OCI-LY7 (cell line): ENCODE measurements at regions of chr2 and their contacts with region 1.

Region 1: GRCh38 chr2:118003396-118003824 is 10.5 kb downstream of the CCDC93 start:
- DNase-seq: peak; percentile 82
- H3K4me3 ChIP-seq: no peak overlapping the region
- H3K27ac ChIP-seq: no peak overlapping the region
- H3K4me1 ChIP-seq: peaks cover 14% of the 10 kb centered on the region
- CTCF ChIP-seq: peak; percentile 97

Region 2: GRCh38 chr2:117835990-117836760 is 167.2 kb before region 1 on chr2:
- CTCF ChIA-PET with region 1: interaction called, 11 read pairs
- POLR2A ChIA-PET with region 1: interaction called, 6 read pairs
- intact Hi-C with region 1: loop called (anchors 1 kb)
- DNase-seq: peak; percentile 68
- H3K4me3 ChIP-seq: no peak overlapping the region
- H3K27ac ChIP-seq: no peak overlapping the region
- H3K4me1 ChIP-seq: peaks cover 4% of the 10 kb centered on the region
- CTCF ChIP-seq: peak; percentile 77

Region 3: DNA sequence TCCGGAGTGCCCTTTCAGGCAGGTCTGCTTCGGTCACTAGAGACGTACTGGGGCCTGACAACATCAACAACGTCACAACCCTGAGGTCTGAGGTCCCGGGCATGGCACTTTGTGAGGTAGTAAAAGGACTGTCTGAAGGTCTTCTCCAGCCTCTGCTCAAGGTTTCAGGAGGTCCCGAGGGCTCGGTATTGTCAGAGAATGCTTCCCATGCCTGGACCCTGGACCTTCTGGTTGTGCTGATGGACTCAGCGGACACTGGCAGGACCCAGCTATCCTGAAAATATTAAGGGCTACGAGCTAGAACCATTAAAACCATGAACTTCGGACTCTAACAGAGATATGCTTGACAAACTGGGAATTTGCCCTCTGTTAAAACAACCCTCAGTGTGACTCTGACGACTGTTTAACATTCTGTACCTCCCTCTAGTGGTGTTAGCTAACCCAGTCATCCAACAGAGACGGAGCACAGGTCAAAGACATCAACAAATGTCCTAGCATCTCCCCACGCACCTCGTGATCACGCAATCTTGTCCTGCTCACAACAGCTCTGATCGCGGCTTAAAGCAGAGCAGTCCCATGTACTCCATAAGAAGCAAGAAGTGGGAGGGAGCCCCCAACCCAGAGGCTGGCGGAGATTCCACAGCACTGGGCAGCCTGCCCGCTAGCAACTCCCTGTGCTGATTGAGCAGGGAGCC is 86.0 kb before region 1 on chr2:
- CTCF ChIA-PET with region 1: interaction called, 3 read pairs
- POLR2A ChIA-PET with region 1: interaction called, 5 read pairs
- intact Hi-C with region 1: loop called (anchors 5 kb)
- DNase-seq: no peak
- H3K4me3 ChIP-seq: peak overlapping the region; percentile 28
- H3K27ac ChIP-seq: peak overlapping the region; percentile 100
- H3K4me1 ChIP-seq: peaks cover 56% of the 10 kb centered on the region
- CTCF ChIP-seq: 0 out of 2 replicates have a peak, but pooled peaks have one; percentile 21

Region 4: DNA sequence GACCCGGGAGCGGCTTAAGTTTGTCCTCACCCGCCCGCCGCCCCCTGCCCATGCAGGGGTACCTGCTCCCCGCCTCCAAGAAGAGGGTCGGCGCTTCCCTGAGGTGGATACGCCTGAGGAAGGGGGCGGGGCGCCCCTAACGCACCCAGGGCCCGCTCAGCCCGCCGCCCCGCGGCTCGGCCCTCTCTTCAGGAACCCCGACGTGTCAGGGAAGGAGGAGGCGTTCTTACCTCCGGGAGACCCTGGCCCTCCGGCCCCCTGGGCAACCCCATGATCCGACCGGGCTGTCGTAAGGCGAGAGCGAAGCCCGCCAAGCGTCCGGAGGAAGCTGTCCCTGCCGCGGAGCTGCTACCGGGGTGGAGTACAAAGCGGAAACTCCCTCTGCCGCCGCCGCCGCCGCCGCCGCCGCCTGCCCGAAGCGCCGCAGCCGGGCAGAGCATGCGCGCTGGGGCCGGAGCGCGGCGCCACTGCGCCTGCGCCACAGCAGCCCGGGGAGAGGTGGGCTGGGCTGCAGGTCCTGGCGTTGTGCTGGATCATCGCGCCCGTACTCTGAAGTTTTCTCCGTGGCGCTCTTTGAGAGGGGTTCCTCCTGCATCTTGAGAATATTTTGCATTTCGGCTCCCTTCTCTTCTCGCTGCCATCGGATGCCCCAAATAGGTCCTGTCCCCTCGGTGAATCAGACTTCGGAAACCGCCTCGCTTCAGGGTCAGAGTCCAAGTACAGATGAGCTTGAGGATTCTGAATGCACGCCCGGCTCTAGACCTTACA is 10.5 kb after region 1 on chr2 and contains the start of gene CCDC93:
- CTCF ChIA-PET with region 1: interaction called, 12 read pairs
- POLR2A ChIA-PET with region 1: interaction called, 8 read pairs
- intact Hi-C with region 1: no loop called
- DNase-seq: peak; percentile 87
- H3K4me3 ChIP-seq: peak within 1 kb of the TSS; percentile 100
- H3K27ac ChIP-seq: peak within 1 kb of the TSS; percentile 58
- H3K4me1 ChIP-seq: peaks cover 25% of the 10 kb centered on the region
- CTCF ChIP-seq: no peak
- total RNA-seq, gene CCDC93: 25.6 and 28.2 TPM in 2 replicates

Region 5: DNA sequence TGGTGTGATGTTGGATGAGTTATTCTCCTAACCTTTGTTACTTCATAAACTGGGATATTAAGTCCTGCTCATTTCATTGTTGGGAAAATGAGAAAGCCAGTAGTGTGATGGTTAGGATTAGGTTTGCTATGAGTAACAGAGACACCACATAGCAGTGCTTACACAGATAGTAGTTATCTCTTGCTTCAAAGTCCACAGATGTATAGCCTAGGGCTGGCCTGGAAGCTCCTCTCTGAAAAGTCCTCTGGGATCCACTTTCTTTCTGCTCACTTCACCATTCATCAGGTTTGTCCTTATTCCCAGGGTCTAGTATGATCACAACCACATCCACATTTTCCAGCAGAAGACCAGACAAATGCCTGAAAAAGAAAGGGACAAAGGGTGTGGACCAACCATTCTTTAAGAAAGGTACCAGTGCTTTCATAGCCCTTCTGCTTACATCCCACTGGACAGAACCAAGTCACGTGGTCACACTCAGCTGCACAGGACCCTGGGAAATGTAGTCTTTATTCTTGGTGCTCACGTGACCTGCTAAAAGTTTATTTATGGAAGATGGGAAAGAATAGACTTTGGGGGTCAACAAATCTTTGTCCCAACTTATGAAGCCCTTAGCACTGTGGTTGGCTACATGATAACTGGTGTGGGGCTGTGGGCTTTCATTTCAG is 193.7 kb after region 1 on chr2:
- CTCF ChIA-PET with region 1: no interaction called
- POLR2A ChIA-PET with region 1: no interaction called
- intact Hi-C with region 1: no loop called
- DNase-seq: peak; percentile 30
- H3K4me3 ChIP-seq: no peak overlapping the region
- H3K27ac ChIP-seq: no peak overlapping the region
- H3K4me1 ChIP-seq: no peaks in the 10 kb centered on the region
- CTCF ChIP-seq: no peak